Activated CD4-positive, alpha-beta T cell treated with anti-CD3 and anti-CD28 coated beads, Interleukin-2, amount 10 ng/mL, durations not matched to agents 24 days and 14 days (primary cell): ENCODE measurements at regions of chr7 and their contacts with region 1.

Region 1: GRCh38 chr7:56051339-56052191 is at the starts of genes CCT6A and PSPH:
- DNase-seq: peak; percentile 98
- H3K4me3 Mint-ChIP-seq: peak within 1 kb of the TSS; percentile 100
- H3K27ac Mint-ChIP-seq: peak within 1 kb of the TSS; percentile 98
- H3K4me1 Mint-ChIP-seq: peaks cover 29% of the 10 kb centered on the region
- H3K27me3 Mint-ChIP-seq: no peaks in the 10 kb centered on the region
- total RNA-seq, gene CCT6A: 339 and 342 TPM in 2 replicates
- total RNA-seq, gene PSPH: 23.8 and 25.8 TPM in 2 replicates

Region 2: DNA sequence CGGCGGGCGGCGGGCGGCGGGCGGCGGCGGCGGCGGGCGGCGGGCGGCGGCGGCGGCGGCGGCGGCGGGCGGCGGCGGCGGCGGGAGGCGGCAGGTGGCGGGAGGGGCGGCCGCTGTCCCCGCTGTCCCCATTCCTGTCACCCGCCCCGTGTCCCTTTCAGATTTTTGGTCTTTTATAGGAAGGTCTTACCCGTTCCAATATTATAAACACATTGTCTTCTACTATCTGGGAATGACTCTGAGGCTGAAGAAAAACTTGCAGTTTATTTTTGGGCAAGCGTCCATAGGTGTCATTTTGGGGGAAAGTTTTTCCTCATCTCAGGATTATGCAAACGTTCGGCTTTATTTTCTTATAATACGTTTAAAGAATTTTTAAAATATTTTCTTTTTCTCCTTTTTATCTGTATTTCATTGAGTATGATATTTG is 163.7 kb before region 1 on chr7:
- intact Hi-C with region 1: loop called (anchors 5 kb)
- DNase-seq: peak; percentile 64
- H3K4me3 Mint-ChIP-seq: peak overlapping the region; percentile 82
- H3K27ac Mint-ChIP-seq: peak overlapping the region; percentile 88
- H3K4me1 Mint-ChIP-seq: peaks cover 8% of the 10 kb centered on the region
- H3K27me3 Mint-ChIP-seq: no peaks in the 10 kb centered on the region

Region 3: DNA sequence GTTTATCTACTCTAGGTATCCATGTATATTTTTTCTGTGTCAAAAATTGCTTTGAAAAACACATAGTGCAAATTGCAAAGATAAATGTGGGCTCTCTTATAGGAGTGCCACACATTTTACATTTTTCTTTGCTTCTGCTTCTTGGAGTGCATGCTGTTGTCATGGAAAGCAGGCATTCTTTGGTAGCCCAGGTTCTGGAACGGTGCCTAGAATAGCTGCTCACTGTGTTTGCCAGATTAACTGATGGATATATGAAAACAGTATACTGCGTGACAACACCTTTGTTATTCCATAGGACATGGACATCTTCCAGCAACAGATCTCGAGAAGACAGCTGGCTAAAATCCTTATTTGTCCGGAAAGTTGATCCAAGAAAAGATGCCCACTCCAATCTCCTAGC is 73.7 kb before region 1 on chr7:
- intact Hi-C with region 1: no loop called
- DNase-seq: no peak
- H3K4me3 Mint-ChIP-seq: no peak overlapping the region
- H3K27ac Mint-ChIP-seq: no peak overlapping the region
- H3K4me1 Mint-ChIP-seq: peaks cover 3% of the 10 kb centered on the region
- H3K27me3 Mint-ChIP-seq: no peaks in the 10 kb centered on the region

Region 4: GRCh38 chr7:56003749-56004148 is 47.8 kb before region 1 on chr7:
- intact Hi-C with region 1: loop called (anchors 2 kb)
- DNase-seq: no peak
- H3K4me3 Mint-ChIP-seq: no peak overlapping the region
- H3K27ac Mint-ChIP-seq: no peak overlapping the region
- H3K4me1 Mint-ChIP-seq: peaks cover 12% of the 10 kb centered on the region
- H3K27me3 Mint-ChIP-seq: no peaks in the 10 kb centered on the region

Region 5: GRCh38 chr7:56063882-56064625 is 12.5 kb after region 1 on chr7 and contains the start of gene SUMF2:
- intact Hi-C with region 1: loop called (anchors 1 kb)
- DNase-seq: peak; percentile 97
- H3K4me3 Mint-ChIP-seq: peak within 1 kb of the TSS; percentile 94
- H3K27ac Mint-ChIP-seq: peak within 1 kb of the TSS; percentile 96
- H3K4me1 Mint-ChIP-seq: peaks cover 34% of the 10 kb centered on the region
- H3K27me3 Mint-ChIP-seq: peaks cover 2% of the 10 kb centered on the region
- total RNA-seq, gene SUMF2: 154 and 161 TPM in 2 replicates

Region 6: DNA sequence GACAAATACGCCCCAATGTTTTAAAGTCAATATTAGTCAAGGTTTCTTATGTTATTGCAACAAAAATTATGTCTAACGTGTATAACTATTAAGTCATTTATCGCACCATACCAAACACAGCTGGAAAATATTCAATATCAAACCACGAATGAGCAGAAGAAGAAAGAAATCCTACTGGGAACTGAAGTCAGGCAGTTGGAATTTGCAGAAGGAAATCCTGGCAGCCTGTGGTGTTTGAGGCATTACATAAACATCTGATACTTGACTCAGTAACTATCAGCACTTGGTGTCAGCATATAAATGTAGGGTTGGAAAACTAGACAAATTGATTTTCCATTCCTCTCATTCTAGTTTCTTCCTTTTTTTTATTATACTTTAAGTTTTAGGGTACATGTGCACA is 148.1 kb after region 1 on chr7:
- intact Hi-C with region 1: no loop called
- DNase-seq: no peak
- H3K4me3 Mint-ChIP-seq: no peak overlapping the region
- H3K27ac Mint-ChIP-seq: no peak overlapping the region
- H3K4me1 Mint-ChIP-seq: no peaks in the 10 kb centered on the region
- H3K27me3 Mint-ChIP-seq: no peaks in the 10 kb centered on the region